Right cardiac atrium (tissue), 5 donors: ENCODE measurements at regions of chr16 and their contacts with region 1.

Region 1: GRCh38 chr16:30844671-30845449 is 49.0 kb downstream of the BCL7C start:
- DNase-seq: peak in 2 of 3 donors; percentile 60 to 63
- ATAC-seq: peak; percentile 82 to 93
- H3K4me3 ChIP-seq: no peak overlapping the region
- H3K27ac ChIP-seq: peak overlapping the region; percentile 54
- H3K4me1 ChIP-seq: peaks cover 4% of the 10 kb centered on the region
- H3K27me3 ChIP-seq: no peaks in the 10 kb centered on the region

Region 2: GRCh38 chr16:30805370-30806169 is 39.3 kb before region 1 on chr16:
- intact Hi-C with region 1: no loop called
- DNase-seq: peak; percentile 90 to 97 (median 96)
- ATAC-seq: peak; percentile 98
- H3K4me3 ChIP-seq: peak overlapping the region; percentile 88
- H3K27ac ChIP-seq: peak overlapping the region; percentile 92
- H3K4me1 ChIP-seq: peaks cover 2% of the 10 kb centered on the region
- H3K27me3 ChIP-seq: no peaks in the 10 kb centered on the region

Region 3: GRCh38 chr16:30902029-30902972 is 57.4 kb after region 1 on chr16:
- intact Hi-C with region 1: loop called in 1 of 4 experiments (anchors 5 kb)
- DNase-seq: peak; percentile 79 to 92 (median 91)
- ATAC-seq: peak; percentile 83 to 88
- H3K4me3 ChIP-seq: peak overlapping the region; percentile 83
- H3K27ac ChIP-seq: peak overlapping the region; percentile 71
- H3K4me1 ChIP-seq: peaks cover 3% of the 10 kb centered on the region
- H3K27me3 ChIP-seq: no peaks in the 10 kb centered on the region

Region 4: DNA sequence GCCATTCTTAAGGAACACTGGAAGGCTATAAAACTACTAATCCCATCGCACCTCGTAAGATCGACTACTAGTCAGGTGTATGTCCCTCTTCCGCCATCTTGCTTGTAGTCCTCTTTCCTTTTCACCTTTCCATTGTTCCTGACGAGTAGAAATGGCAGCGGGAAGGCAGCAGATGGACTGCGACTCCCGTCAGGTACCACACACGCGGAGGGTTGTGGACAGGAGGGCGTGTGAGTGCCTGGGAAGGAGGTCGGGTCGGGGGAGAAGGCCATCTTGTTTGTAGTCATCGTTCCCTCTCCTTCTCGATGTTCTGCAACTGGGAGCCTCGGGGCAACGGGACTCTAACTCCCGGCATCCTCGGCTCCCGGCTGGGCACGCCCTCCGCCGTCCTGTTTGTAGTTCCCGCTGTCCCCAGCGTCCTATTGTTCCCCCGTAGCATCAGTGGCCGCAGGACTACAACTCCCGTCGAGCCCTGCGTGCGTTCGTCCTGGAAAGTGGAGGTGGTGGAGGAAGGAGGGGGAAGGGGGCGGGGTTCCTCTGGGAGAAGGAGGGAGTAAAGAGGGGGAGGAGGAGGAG is 78.2 kb after region 1 on chr16:
- intact Hi-C with region 1: loop called in 3 of 4 experiments (anchors 2 to 10 kb)
- DNase-seq: peak; percentile 100
- ATAC-seq: peak; percentile 88 to 89
- H3K4me3 ChIP-seq: peak overlapping the region; percentile 95
- H3K27ac ChIP-seq: peak overlapping the region; percentile 94
- H3K4me1 ChIP-seq: no peaks in the 10 kb centered on the region
- H3K27me3 ChIP-seq: no peaks in the 10 kb centered on the region